ENCODE measurements at regions of chr20 and their contacts with region 1.

Region 1: DNA sequence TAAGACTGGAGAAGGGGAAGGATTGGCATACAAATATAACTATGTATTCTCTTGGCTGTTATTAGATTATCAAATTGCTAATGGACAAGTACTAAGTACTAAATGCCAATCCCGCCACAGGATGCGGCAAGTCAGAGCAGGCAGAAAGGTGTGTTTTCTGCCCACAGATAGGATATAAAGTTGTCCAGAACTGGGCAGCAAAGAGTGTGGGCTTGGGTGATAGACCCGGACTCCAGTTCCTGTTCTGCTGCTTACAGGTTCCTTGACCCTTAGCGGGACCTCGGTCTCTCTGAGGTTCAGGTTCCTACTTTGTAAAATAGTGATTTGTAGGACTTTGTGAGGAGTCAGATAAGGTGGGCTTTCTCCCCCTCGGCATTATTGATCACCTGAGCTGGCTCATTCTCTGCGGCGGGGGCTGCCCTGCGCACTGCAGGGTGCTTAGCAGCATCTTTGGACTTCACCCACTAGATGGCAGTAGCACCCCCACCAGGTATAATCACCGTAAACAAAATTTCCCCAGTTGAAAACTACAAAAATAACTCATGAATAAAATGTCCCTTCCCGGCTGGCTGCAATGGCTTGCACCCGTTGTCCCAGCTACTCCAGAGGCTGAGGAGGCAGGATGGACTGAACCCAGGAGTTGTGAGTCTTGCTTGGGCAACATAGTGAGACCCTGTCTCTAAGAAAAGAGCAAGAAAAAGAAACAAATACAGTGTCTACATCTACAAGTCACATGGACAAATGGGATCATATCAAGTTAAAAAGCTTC is 193.1 kb downstream of the DOK5 start:
- DNase-seq: peak; percentile 36
- ATAC-seq: no peak
- H3K4me3 ChIP-seq: no peak overlapping the region
- H3K4me3 Mint-ChIP-seq: no peak overlapping the region
- H3K27ac ChIP-seq: no peak overlapping the region
- H3K27ac Mint-ChIP-seq: no peak overlapping the region
- H3K4me1 ChIP-seq: peaks cover 0 to 5% of the 10 kb centered on the region in 2 donors
- H3K4me1 Mint-ChIP-seq: peaks cover 4% of the 10 kb centered on the region
- H3K27me3 ChIP-seq: peaks cover 0 to 4% (median 2%) of the 10 kb centered on the region in 4 experiments
- H3K27me3 Mint-ChIP-seq: peaks cover 27% of the 10 kb centered on the region
- CTCF ChIP-seq: peak; percentile 76

Region 2: GRCh38 chr20:54629686-54630085 is 38.8 kb before region 1 on chr20:
- CTCF ChIA-PET with region 1: no interaction called
- POLR2A ChIA-PET with region 1: no interaction called
- intact Hi-C with region 1: no loop called
- DNase-seq: no peak
- ATAC-seq: no peak
- H3K4me3 ChIP-seq: no peak overlapping the region
- H3K4me3 Mint-ChIP-seq: no peak overlapping the region
- H3K27ac ChIP-seq: no peak overlapping the region
- H3K27ac Mint-ChIP-seq: no peak overlapping the region
- H3K4me1 ChIP-seq: peaks cover 8 to 12% of the 10 kb centered on the region in 2 donors
- H3K4me1 Mint-ChIP-seq: peaks cover 14% of the 10 kb centered on the region
- H3K27me3 ChIP-seq: no peaks in the 10 kb centered on the region
- H3K27me3 Mint-ChIP-seq: peaks cover 21% of the 10 kb centered on the region
- CTCF ChIP-seq: no peak

Region 3: DNA sequence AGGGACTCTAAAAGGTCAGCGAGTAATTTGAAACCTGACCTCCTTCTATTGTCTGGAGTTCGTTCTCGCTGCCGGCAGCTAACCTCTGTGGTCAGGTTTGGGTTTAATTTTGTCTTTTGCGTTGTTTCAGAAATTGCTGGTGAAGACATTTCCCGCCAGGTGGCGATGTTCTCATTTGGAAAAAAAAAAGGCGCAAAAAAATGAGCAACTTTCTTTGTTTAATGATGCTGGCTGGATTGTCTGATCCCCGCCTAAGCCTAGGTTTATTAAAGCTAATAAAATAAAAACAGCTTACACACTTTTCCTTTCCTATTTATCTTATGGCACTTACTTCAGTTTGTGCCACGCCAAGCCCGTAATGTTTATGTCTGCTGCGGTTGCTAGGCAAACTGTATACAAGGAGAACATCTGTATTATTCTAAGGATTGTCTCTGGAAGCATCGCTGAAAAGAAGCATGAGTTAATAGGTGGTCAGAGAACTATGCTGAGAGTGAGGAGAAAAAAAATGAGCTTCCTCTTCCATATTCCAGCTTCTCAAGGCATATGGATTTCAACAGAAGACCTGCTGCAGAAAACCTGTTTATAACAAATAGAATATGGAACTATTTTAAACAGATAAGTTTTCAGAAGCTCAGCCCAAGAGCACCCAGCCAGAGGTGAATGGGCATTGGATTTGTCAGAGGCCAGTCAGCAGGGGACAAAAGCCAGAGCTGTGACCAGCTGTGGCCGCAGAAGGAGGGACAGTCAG is 12.6 kb after region 1 on chr20:
- CTCF ChIA-PET with region 1: interaction called, 10 read pairs
- POLR2A ChIA-PET with region 1: no interaction called
- intact Hi-C with region 1: no loop called
- DNase-seq: peak; percentile 12
- ATAC-seq: no peak
- H3K4me3 ChIP-seq: no peak overlapping the region
- H3K4me3 Mint-ChIP-seq: no peak overlapping the region
- H3K27ac ChIP-seq: no peak overlapping the region
- H3K27ac Mint-ChIP-seq: no peak overlapping the region
- H3K4me1 ChIP-seq: no peaks in the 10 kb centered on the region
- H3K4me1 Mint-ChIP-seq: no peaks in the 10 kb centered on the region
- H3K27me3 ChIP-seq: peaks cover 0 to 3% (median 0%) of the 10 kb centered on the region in 4 experiments
- H3K27me3 Mint-ChIP-seq: peaks cover 14% of the 10 kb centered on the region
- CTCF ChIP-seq: peak; percentile 69

Measured in B cell (primary cell).